Activated CD4-positive, alpha-beta memory T cell treated with anti-CD3 and anti-CD28 coated beads, Interleukin-2, amount 10 ng/mL, durations not matched to agents 7 days and 5 days (primary cell): ENCODE measurements at regions of chr13 and their contacts with region 1.

Region 1: GRCh38 chr13:25306671-25307464 is 5.4 kb downstream of the NUP58 start:
- DNase-seq: no peak
- H3K4me3 Mint-ChIP-seq: no peak overlapping the region
- H3K27ac Mint-ChIP-seq: no peak overlapping the region
- H3K4me1 Mint-ChIP-seq: peaks cover 44% of the 10 kb centered on the region
- H3K27me3 Mint-ChIP-seq: no peaks in the 10 kb centered on the region

Region 2: DNA sequence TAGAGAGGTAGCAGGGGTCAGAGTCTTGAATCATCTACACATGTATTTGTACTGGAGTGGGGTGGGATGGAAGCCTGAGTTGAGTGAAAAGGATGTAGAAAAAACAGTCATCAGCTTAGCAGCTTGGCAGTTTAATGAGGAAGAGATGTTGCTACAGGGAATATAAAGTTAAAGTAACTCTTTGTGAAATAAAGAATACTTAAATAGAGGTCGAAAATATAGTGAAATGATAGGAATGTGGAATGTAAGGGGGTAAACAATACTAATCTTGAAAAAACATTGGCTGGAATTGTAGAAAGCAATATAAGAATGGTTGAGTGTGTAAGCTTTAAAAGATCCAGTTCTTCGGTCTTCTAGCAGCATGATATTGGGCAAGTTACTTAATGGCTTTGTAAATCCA is 17.2 kb after region 1 on chr13:
- CTCF ChIA-PET with region 1: interaction called, 3 read pairs
- POLR2A ChIA-PET with region 1: interaction called, 11 read pairs
- DNase-seq: no peak
- H3K4me3 Mint-ChIP-seq: no peak overlapping the region
- H3K27ac Mint-ChIP-seq: no peak overlapping the region
- H3K4me1 Mint-ChIP-seq: no peaks in the 10 kb centered on the region
- H3K27me3 Mint-ChIP-seq: no peaks in the 10 kb centered on the region